ENCODE measurements at regions of chr7 and their contacts with region 1.

Region 1: DNA sequence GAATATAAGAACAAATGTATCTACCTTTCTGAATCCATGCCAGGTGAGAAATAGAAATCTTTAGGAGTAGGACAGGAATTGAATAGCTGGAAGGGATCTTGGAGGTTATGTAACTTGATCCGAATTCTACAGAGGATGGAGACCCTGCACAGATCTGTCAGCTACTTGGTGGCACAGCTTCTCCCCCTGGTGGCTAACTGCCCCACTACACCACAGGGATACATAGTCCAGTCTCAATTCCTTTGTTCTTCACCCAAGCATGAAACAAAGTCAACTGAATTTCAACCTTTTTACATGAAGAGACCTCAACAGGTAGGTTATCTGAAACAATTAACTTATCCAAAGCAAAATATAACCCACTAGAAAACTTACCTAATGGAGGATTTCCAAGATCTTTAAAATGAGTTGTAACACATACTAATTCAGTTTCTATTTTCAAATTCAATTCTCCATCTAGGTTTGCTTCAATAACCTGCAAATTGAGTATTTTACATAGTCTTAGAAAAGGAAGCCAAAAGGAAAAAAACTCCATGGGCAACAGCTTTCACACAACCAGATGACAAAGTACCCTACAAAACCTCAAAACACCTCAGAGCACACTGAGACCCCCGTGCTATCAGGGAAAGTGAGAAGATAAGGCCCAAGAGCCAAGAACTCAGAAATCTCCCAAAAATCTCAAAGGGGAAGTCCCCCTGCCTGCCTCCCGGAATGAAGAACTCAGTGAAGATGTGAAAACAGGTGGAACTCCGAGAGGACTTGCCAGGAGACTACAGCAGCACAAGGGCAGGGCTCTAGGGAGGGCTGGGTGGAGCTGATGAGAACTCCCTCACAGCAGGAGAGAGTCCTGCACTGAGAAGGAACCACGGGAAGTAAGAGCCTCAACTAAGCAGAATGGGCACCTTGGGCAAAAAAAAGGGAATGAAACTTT is 10.3 kb downstream of the HUS1 start:
- DNase-seq: peak; percentile 62 to 74 (median 68)
- ATAC-seq: peak; percentile 59 to 83 (median 70)
- H3K4me3 ChIP-seq: no peak overlapping the region
- H3K27ac ChIP-seq: peak overlapping the region in 4 of 12 donors; percentile 21 to 77 (median 26)
- H3K4me1 ChIP-seq: peaks cover 0 to 45% (median 9%) of the 10 kb centered on the region in 12 donors
- H3K27me3 ChIP-seq: no peaks in the 10 kb centered on the region
- CTCF ChIP-seq: peak; percentile 73 to 97 (median 87)
- POLR2A ChIP-seq: no peak

Region 2: GRCh38 chr7:47792521-47793121 is 176.5 kb before region 1 on chr7:
- intact Hi-C with region 1: loop called in 1 of 10 experiments (anchors 5 kb)
- DNase-seq: no peak
- ATAC-seq: peak in 1 of 4 donors; percentile 54
- H3K4me3 ChIP-seq: no peak overlapping the region
- H3K27ac ChIP-seq: no peak overlapping the region
- H3K4me1 ChIP-seq: no peaks in the 10 kb centered on the region
- H3K27me3 ChIP-seq: no peaks in the 10 kb centered on the region
- CTCF ChIP-seq: peak; percentile 19 to 61 (median 52)
- POLR2A ChIP-seq: no peak

Region 3: GRCh38 chr7:47945261-47946001 is 23.7 kb before region 1 on chr7:
- intact Hi-C with region 1: loop called in 6 of 10 experiments (anchors 1 to 2 kb)
- DNase-seq: peak; percentile 70 to 88 (median 82)
- ATAC-seq: no peak
- H3K4me3 ChIP-seq: peak overlapping the region in 2 of 12 donors; percentile 6
- H3K27ac ChIP-seq: peak overlapping the region in 10 of 12 donors; percentile 44 to 93 (median 76)
- H3K4me1 ChIP-seq: peaks cover 0 to 84% (median 38%) of the 10 kb centered on the region in 12 donors
- H3K27me3 ChIP-seq: no peaks in the 10 kb centered on the region
- CTCF ChIP-seq: peak; percentile 67 to 96 (median 82)
- POLR2A ChIP-seq: no peak

Region 4: GRCh38 chr7:48094751-48095562 is 125.8 kb after region 1 on chr7:
- intact Hi-C with region 1: no loop called
- DNase-seq: no peak
- ATAC-seq: no peak
- H3K4me3 ChIP-seq: no peak overlapping the region
- H3K27ac ChIP-seq: peak overlapping the region in 1 of 12 donors; percentile 93
- H3K4me1 ChIP-seq: peaks cover 0 to 80% (median 4%) of the 10 kb centered on the region in 12 donors
- H3K27me3 ChIP-seq: no peaks in the 10 kb centered on the region
- CTCF ChIP-seq: no peak
- POLR2A ChIP-seq: no peak

Region 5: GRCh38 chr7:48154792-48155413 is 185.8 kb after region 1 on chr7:
- intact Hi-C with region 1: no loop called
- DNase-seq: no peak
- ATAC-seq: no peak
- H3K4me3 ChIP-seq: no peak overlapping the region
- H3K27ac ChIP-seq: no peak overlapping the region
- H3K4me1 ChIP-seq: no peaks in the 10 kb centered on the region
- H3K27me3 ChIP-seq: peaks cover 0 to 5% (median 0%) of the 10 kb centered on the region in 9 donors
- CTCF ChIP-seq: peak in 7 of 12 donors; percentile 11 to 39 (median 29)
- POLR2A ChIP-seq: no peak

Region 6: GRCh38 chr7:48182718-48183369 is 213.7 kb after region 1 on chr7:
- intact Hi-C with region 1: no loop called
- DNase-seq: no peak
- ATAC-seq: no peak
- H3K4me3 ChIP-seq: no peak overlapping the region
- H3K27ac ChIP-seq: no peak overlapping the region
- H3K4me1 ChIP-seq: no peaks in the 10 kb centered on the region
- H3K27me3 ChIP-seq: no peaks in the 10 kb centered on the region
- CTCF ChIP-seq: no peak
- POLR2A ChIP-seq: no peak

Measured in heart left ventricle (tissue), 16 donors.